ENCODE measurements at regions of chr17 and their contacts with region 1.

Region 1: GRCh38 chr17:4017377-4017776 is 53.1 kb upstream of the ATP2A3 start:
- DNase-seq: no peak
- H3K4me3 ChIP-seq: no peak overlapping the region
- H3K27ac ChIP-seq: no peak overlapping the region
- H3K4me1 ChIP-seq: no peaks in the 10 kb centered on the region
- H3K27me3 ChIP-seq: no peaks in the 10 kb centered on the region
- CTCF ChIP-seq: no peak
- POLR2A ChIP-seq: no peak

Region 2: DNA sequence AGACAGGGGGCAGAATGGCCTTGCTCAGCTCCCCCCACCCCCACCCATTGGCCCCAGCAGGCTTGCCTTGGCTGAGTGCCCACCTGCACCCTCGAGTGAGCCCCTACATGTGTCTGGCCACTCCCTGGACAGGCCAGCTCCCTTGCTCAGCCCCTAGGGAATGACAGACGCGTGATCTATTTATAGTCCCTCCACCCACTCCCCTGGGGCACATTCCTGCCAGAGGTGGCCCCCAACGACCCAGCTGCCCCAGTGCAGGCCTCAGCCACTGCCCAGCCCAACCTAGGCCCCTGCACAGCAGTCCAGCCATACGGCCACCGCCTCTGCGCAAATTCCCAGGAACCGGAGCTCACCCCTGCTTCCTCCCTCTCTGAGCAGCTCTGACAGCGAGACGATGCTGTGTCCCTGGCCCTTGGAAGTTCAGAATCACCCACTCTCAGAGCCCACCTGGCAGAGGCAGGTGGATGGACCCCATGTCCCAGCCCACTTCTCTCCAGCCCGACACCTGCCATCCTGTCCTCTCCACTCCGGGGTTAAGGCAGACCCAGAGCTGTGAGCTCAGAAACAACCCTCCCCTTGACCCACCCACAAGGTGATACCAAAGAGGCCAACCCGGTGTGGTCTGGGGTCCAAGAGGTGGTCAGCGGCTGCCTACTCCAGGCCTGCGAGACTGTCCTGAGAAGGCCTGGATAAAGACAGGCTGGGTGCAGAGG is 89.6 kb before region 1 on chr17:
- intact Hi-C with region 1: no loop called
- DNase-seq: no peak
- H3K4me3 ChIP-seq: no peak overlapping the region
- H3K27ac ChIP-seq: no peak overlapping the region
- H3K4me1 ChIP-seq: no peaks in the 10 kb centered on the region
- H3K27me3 ChIP-seq: no peaks in the 10 kb centered on the region
- CTCF ChIP-seq: no peak
- POLR2A ChIP-seq: no peak

Region 3: GRCh38 chr17:4074831-4075495 is 57.6 kb after region 1 on chr17:
- intact Hi-C with region 1: no loop called
- DNase-seq: peak in 1 of 7 donors; percentile 20
- H3K4me3 ChIP-seq: no peak overlapping the region
- H3K27ac ChIP-seq: peak overlapping the region; percentile 9 to 87 (median 73)
- H3K4me1 ChIP-seq: peaks cover 12 to 47% of the 10 kb centered on the region in 2 donors
- H3K27me3 ChIP-seq: no peaks in the 10 kb centered on the region
- CTCF ChIP-seq: peak; percentile 44 to 68 (median 55)
- POLR2A ChIP-seq: no peak

Region 4: DNA sequence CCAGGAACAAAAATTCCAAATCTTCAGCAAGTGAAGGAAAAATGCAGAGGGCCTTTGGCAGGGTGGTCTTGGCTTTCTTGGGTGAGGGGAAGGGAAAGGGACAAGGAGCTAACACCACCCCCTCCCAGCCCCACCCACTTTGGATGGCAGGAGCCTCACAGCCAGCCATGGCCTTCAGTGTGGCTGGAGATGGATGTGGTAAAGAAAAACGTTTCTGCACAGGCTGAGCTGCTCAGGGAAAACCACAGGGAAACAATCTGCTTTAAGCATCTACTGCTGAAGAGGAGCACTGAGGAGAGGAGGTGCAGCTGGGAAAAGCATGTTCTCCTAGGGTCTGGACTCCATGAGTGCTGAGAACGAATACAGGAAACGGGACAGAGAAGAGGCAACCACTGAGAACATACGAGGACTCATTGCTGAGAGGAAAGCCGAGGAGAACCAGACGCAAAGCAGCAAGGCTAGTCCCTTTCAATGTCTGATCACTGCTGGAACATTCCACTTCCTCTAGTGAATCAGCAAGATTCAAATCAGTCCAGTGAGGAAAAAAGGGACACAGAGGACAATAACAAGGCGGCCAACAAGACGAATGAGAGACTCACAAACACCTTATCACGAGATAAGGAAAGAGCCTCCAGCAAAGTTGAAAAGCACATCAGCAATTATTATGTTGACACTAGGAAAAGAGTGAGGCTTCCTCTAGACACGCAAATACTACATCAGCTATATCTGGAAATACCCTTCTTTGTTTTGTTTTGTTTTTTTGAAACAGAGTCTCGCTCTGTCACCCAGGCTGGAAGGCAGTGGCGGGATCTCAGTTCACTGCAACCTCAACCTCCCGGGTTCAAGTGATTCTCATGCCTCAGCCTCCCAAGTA is 83.7 kb after region 1 on chr17:
- intact Hi-C with region 1: no loop called
- DNase-seq: peak in 5 of 7 donors; percentile 30 to 65 (median 36)
- H3K4me3 ChIP-seq: no peak overlapping the region
- H3K27ac ChIP-seq: peak overlapping the region; percentile 54 to 86 (median 73)
- H3K4me1 ChIP-seq: peaks cover 17 to 37% of the 10 kb centered on the region in 2 donors
- H3K27me3 ChIP-seq: no peaks in the 10 kb centered on the region
- CTCF ChIP-seq: no peak
- POLR2A ChIP-seq: peak in 1 of 2 donors; percentile 21

Region 5: GRCh38 chr17:4130715-4131114 is 113.3 kb after region 1 on chr17:
- intact Hi-C with region 1: loop called in 1 of 2 experiments (anchors 5 kb)
- DNase-seq: peak in 6 of 7 donors; percentile 40 to 66 (median 59)
- H3K4me3 ChIP-seq: no peak overlapping the region
- H3K27ac ChIP-seq: peak overlapping the region in 4 of 5 donors; percentile 11 to 73 (median 56)
- H3K4me1 ChIP-seq: peaks cover 0 to 22% of the 10 kb centered on the region in 2 donors
- H3K27me3 ChIP-seq: no peaks in the 10 kb centered on the region
- CTCF ChIP-seq: no peak
- POLR2A ChIP-seq: no peak